HEK293T (cell line): ENCODE measurements at regions of chr16 and their contacts with region 1.

Region 1: DNA sequence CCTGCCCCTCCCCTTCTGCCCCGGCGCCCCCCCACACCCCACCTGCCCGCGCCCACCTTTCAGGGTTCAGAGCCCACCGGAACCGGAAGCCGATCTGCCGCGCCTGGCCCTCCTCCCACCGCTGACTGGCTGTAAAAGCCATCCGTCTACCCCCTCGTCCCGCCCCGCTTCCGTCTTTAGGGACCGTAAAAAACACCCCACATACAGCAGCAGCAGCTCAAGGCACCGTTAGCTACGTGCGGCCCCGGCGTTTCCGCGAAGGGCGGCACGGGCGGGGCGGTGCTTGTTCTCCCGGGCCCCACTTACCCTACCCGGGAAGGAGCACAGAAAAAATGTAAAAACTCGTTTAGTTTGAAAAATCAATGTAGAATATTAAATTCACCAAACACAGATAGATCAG is at the start of gene MRPL28:
- DNase-seq: peak; percentile 96

Region 2: DNA sequence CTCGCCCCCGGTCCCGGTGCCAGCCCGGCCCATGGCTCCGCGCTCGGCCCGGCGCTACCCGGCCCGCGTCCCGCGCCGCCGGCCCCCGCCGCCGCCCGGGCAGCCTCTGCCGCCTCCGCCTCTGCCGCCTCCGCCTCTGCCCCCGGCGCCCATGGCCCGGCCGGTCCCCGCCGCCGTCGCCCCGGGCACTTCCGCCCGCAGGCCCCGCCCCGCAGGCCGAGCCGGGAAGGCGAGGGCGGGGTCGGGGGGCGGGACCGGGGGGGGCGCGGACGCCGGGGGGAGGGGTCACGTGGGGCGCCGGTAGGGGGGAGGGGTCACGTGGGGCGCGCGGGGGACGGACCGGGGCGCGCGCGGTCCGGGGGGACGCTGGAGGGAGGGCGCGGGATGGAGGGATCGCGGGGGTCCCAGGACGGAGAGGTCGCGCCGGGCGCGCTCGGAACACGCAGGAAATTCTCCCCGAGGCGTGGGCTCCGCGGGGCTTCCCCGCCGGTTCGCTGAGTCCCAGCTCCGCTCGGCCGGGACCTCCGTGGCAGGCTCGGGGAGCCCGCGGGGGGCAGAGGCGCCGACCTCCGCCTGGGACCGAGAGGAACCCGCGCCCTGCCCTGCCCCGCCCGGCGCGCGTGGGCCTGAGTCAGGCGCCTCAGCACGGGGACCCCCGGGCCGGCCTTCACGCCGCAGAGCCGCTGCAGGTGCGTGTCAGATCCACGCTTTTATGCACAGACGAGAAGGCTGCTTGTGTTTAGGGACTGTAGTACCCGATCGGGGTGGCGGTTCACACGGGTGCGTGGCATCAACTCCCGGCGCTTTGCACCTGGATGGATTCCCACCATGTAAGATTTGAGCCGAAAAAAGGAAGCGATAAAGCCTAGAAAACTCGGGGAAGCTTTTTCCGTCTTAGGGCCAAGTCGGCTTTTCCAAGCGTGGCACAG is 11.6 kb after region 1 on chr16 and contains the start of gene PGAP6:
- CTCF ChIA-PET with region 1: interaction called, 6 read pairs
- POLR2A ChIA-PET with region 1: interaction called, 17 read pairs
- DNase-seq: peak; percentile 86